ENCODE measurements at regions of chr6 and their contacts with region 1.

Region 1: DNA sequence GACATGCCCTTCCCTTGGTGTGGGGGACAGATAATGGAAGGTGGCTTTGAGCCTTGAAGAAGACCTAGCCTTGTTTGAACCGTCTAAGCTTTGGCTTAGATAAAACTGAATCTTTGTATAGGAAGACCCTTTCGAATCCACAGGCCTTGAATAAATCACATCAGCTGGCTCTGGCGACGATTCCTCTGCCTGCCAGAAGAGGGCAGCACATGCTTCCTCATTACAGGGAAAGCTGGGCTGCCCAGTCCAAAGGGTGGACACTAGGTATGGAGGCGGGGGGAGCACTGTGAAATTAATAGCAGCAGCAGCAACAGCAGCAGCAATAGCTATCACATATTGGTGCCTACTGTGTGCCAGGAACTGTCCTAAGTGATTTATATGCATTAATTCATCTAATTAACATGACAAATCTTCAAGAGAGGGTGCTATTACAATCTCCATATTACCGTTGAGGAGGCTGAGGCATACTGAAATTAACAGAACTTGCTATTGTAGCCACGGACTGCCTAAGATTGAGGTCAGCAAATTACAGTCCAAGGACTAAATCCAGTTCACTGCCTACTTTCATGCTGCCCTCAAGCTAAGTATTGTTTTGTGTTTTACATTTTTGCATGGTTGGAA is 85.1 kb downstream of the CLIC5 start:
- DNase-seq: peak; percentile 86
- H3K4me3 Mint-ChIP-seq: no peak overlapping the region
- H3K27ac Mint-ChIP-seq: no peak overlapping the region
- H3K4me1 Mint-ChIP-seq: peaks cover 7% of the 10 kb centered on the region
- H3K27me3 Mint-ChIP-seq: no peaks in the 10 kb centered on the region

Region 2: DNA sequence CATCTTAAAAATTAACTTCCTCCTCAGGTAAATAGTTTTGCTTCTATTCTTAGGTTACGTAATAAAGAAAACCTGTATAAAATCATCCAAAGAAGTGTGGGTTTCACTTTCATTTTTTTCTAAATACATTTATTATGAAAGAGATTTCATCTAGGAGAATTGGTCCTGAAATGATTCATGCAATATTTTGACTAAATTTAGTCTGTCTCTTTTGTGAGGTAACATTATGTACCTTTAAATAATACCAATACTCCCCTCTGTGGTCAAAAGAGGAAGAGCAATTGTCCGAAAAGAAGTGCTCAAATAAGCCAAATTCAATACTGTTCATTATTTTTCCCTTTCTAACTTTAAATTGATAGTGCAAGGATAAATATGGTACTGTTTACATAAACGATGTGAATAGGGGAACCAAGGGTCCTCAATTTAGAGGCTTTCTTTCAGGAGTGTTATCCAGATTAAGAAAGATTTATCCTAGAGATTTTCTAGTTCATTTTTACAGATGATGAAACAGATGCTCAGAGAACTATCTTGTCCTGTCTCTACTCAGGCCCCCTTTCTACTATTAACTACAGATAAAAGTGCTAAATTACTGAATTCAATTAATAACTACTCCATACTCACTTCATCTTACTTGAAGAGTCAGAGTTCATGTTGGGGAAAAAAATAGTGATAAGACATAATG is 695.8 kb after region 1 on chr6:
- intact Hi-C with region 1: loop called (anchors 5 kb)
- DNase-seq: no peak
- H3K4me3 Mint-ChIP-seq: no peak overlapping the region
- H3K27ac Mint-ChIP-seq: no peak overlapping the region
- H3K4me1 Mint-ChIP-seq: peaks cover 3% of the 10 kb centered on the region
- H3K27me3 Mint-ChIP-seq: peaks cover 29% of the 10 kb centered on the region

Measured in activated CD4-positive, alpha-beta T cell treated with anti-CD3 and anti-CD28 coated beads, Interleukin-2, amount 10 ng/mL, durations not matched to agents 24 days and 14 days (primary cell).